ENCODE measurements at regions of chr6 and their contacts with region 1.

Region 1: DNA sequence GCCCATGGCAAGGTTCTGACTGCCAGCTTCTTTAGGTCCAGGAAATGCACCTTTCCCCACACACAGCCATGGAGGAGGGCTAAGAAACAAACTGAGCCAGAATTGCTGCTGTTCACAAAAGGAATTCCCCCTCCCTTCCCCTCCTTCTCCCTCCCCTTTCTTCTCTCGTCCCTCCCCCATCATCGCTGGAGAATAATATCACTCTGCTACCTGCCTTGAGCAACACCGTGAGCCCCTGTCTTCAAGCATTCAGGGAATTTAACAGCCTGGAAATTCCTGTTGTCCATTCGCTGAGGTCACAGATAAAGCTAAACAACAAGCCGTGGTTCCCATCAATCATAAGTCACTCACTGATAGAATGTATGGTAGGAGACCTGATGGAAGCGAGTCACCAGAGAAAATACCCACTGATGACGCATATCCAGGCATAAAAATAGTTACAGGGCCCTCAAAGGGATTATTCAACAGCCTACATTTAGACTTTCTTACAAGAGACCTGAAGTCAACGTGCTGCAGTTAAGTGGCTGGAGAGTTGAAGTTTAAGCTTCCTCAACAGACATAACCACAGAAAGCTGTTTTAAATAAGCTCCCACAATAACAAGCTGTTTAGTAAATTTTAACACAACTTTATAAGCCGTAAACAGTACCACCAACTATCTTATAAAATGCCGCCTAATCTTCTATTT is 59.7 kb downstream of the HIVEP2 start:
- DNase-seq: peak; percentile 90
- ATAC-seq: peak; percentile 81
- H3K4me3 ChIP-seq: peak overlapping the region in 4 of 5 experiments; percentile 28 to 50 (median 44)
- H3K4me3 Mint-ChIP-seq: peak overlapping the region; percentile 99
- H3K27ac ChIP-seq: peak overlapping the region; percentile 80 to 88
- H3K27ac Mint-ChIP-seq: peak overlapping the region; percentile 99
- H3K4me1 ChIP-seq: peaks cover 29 to 38% of the 10 kb centered on the region in 2 donors
- H3K4me1 Mint-ChIP-seq: peaks cover 76% of the 10 kb centered on the region
- H3K27me3 ChIP-seq: no peaks in the 10 kb centered on the region
- H3K27me3 Mint-ChIP-seq: no peaks in the 10 kb centered on the region
- CTCF ChIP-seq: no peak

Region 2: GRCh38 chr6:142692942-142693341 is 192.4 kb before region 1 on chr6:
- CTCF ChIA-PET with region 1: interaction called, 11 read pairs
- POLR2A ChIA-PET with region 1: no interaction called
- intact Hi-C with region 1: loop called (anchors 1 kb)
- DNase-seq: peak; percentile 79
- ATAC-seq: peak; percentile 91
- H3K4me3 ChIP-seq: no peak overlapping the region
- H3K4me3 Mint-ChIP-seq: no peak overlapping the region
- H3K27ac ChIP-seq: no peak overlapping the region
- H3K27ac Mint-ChIP-seq: no peak overlapping the region
- H3K4me1 ChIP-seq: peaks cover 4% of the 10 kb centered on the region in 2 donors
- H3K4me1 Mint-ChIP-seq: peaks cover 5% of the 10 kb centered on the region
- H3K27me3 ChIP-seq: no peaks in the 10 kb centered on the region
- H3K27me3 Mint-ChIP-seq: no peaks in the 10 kb centered on the region
- CTCF ChIP-seq: peak; percentile 98

Region 3: DNA sequence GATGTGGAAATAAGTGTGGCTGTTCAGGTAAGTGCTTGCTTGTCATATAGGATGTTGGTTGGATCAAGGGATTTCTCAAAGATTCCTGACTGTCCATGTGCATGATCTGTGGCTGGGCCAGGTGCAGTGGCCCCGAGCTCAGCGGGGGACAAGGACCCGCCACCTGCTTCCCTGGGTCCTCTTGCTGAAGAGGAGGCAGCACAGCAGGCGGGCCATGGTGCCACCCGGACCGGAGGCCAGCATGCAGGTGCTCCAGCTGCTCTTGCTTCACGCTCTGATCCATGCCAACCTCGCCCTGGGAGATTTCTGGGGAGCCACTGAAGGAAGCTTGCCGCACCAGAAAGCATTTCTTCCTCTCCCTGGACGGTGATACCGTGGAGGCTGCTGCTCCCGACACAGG is 114.2 kb before region 1 on chr6:
- CTCF ChIA-PET with region 1: no interaction called
- POLR2A ChIA-PET with region 1: no interaction called
- intact Hi-C with region 1: no loop called
- DNase-seq: no peak
- ATAC-seq: no peak
- H3K4me3 ChIP-seq: no peak overlapping the region
- H3K4me3 Mint-ChIP-seq: no peak overlapping the region
- H3K27ac ChIP-seq: no peak overlapping the region
- H3K27ac Mint-ChIP-seq: no peak overlapping the region
- H3K4me1 ChIP-seq: no peaks in the 10 kb centered on the region
- H3K4me1 Mint-ChIP-seq: no peaks in the 10 kb centered on the region
- H3K27me3 ChIP-seq: no peaks in the 10 kb centered on the region
- H3K27me3 Mint-ChIP-seq: no peaks in the 10 kb centered on the region
- CTCF ChIP-seq: no peak

Region 4: DNA sequence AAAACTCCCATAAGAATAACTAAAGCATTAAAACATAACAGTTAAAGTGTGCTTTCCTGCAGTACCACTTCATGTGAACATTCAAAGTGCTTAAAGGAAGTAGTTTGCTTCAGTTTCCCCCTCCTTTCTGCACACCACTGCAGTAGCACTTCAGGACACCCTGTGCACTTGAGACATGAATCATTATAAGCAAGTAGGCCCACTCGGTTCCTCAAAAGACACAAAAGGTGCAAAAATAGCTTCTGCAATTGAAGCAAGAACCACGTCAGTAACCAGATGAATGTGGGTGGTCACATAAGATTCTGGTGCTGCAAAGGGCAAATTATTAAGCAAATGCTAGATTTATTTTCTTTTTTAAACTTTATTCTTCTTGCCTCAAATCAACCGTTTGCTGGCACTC is 101.0 kb before region 1 on chr6:
- CTCF ChIA-PET with region 1: interaction called, 3 read pairs
- POLR2A ChIA-PET with region 1: no interaction called
- intact Hi-C with region 1: loop called (anchors 1 kb)
- DNase-seq: peak; percentile 71
- ATAC-seq: peak; percentile 97
- H3K4me3 ChIP-seq: no peak overlapping the region
- H3K4me3 Mint-ChIP-seq: peak overlapping the region; percentile 55
- H3K27ac ChIP-seq: peak overlapping the region in 1 of 2 donors; percentile 61
- H3K27ac Mint-ChIP-seq: peak overlapping the region; percentile 70
- H3K4me1 ChIP-seq: peaks cover 10 to 12% of the 10 kb centered on the region in 2 donors
- H3K4me1 Mint-ChIP-seq: peaks cover 22% of the 10 kb centered on the region
- H3K27me3 ChIP-seq: no peaks in the 10 kb centered on the region
- H3K27me3 Mint-ChIP-seq: no peaks in the 10 kb centered on the region
- CTCF ChIP-seq: no peak

Region 5: DNA sequence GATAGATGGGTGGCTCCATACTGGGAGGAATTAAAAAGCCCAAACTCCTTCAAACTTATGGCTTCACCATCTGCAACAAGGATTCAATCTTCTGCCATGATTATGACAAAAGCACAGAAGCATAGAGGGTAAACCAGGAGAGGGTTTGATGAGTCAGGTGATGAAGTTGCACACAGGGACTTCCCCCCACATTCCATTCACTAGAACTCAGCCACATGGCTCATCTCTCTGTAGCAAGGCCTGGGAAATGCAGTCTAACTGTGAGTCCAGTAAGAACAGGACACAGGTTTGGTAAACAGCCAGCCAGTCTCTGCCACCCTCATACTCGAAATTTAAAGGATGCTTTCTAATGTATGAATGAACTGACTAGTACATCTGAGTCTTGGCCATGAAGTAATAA is 83.2 kb before region 1 on chr6:
- CTCF ChIA-PET with region 1: no interaction called
- POLR2A ChIA-PET with region 1: no interaction called
- intact Hi-C with region 1: no loop called
- DNase-seq: no peak
- ATAC-seq: no peak
- H3K4me3 ChIP-seq: no peak overlapping the region
- H3K4me3 Mint-ChIP-seq: no peak overlapping the region
- H3K27ac ChIP-seq: peak overlapping the region in 1 of 2 donors; percentile 9
- H3K27ac Mint-ChIP-seq: no peak overlapping the region
- H3K4me1 ChIP-seq: peaks cover 11 to 16% of the 10 kb centered on the region in 2 donors
- H3K4me1 Mint-ChIP-seq: peaks cover 62% of the 10 kb centered on the region
- H3K27me3 ChIP-seq: no peaks in the 10 kb centered on the region
- H3K27me3 Mint-ChIP-seq: no peaks in the 10 kb centered on the region
- CTCF ChIP-seq: no peak

Region 6: GRCh38 chr6:142845624-142846458 is 39.5 kb before region 1 on chr6:
- CTCF ChIA-PET with region 1: interaction called, 6 read pairs
- POLR2A ChIA-PET with region 1: interaction called, 4 read pairs
- intact Hi-C with region 1: loop called (anchors 1 kb)
- DNase-seq: peak; percentile 43
- ATAC-seq: peak; percentile 66
- H3K4me3 ChIP-seq: peak overlapping the region; percentile 15 to 71 (median 41)
- H3K4me3 Mint-ChIP-seq: peak overlapping the region; percentile 95
- H3K27ac ChIP-seq: peak overlapping the region; percentile 86 to 94
- H3K27ac Mint-ChIP-seq: peak overlapping the region; percentile 97
- H3K4me1 ChIP-seq: peaks cover 74 to 78% of the 10 kb centered on the region in 2 donors
- H3K4me1 Mint-ChIP-seq: peaks cover 90% of the 10 kb centered on the region
- H3K27me3 ChIP-seq: no peaks in the 10 kb centered on the region
- H3K27me3 Mint-ChIP-seq: no peaks in the 10 kb centered on the region
- CTCF ChIP-seq: no peak

Region 7: GRCh38 chr6:142867988-142868812 is 17.1 kb before region 1 on chr6:
- CTCF ChIA-PET with region 1: interaction called, 4 read pairs
- POLR2A ChIA-PET with region 1: interaction called, 6 read pairs
- intact Hi-C with region 1: loop called (anchors 2 kb)
- DNase-seq: peak; percentile 47
- ATAC-seq: no peak
- H3K4me3 ChIP-seq: peak overlapping the region in 4 of 5 experiments; percentile 1 to 51 (median 16)
- H3K4me3 Mint-ChIP-seq: peak overlapping the region; percentile 76
- H3K27ac ChIP-seq: peak overlapping the region; percentile 21 to 64
- H3K27ac Mint-ChIP-seq: peak overlapping the region; percentile 67
- H3K4me1 ChIP-seq: peaks cover 41 to 65% of the 10 kb centered on the region in 2 donors
- H3K4me1 Mint-ChIP-seq: peaks cover 80% of the 10 kb centered on the region
- H3K27me3 ChIP-seq: no peaks in the 10 kb centered on the region
- H3K27me3 Mint-ChIP-seq: no peaks in the 10 kb centered on the region
- CTCF ChIP-seq: no peak

Region 8: GRCh38 chr6:142913511-142914047 is 28.3 kb after region 1 on chr6:
- CTCF ChIA-PET with region 1: no interaction called
- POLR2A ChIA-PET with region 1: no interaction called
- intact Hi-C with region 1: loop called (anchors 1 kb)
- DNase-seq: peak; percentile 92
- ATAC-seq: peak; percentile 95
- H3K4me3 ChIP-seq: peak overlapping the region in 4 of 5 experiments; percentile 9 to 60 (median 24)
- H3K4me3 Mint-ChIP-seq: peak overlapping the region; percentile 91
- H3K27ac ChIP-seq: peak overlapping the region; percentile 93
- H3K27ac Mint-ChIP-seq: peak overlapping the region; percentile 99
- H3K4me1 ChIP-seq: peaks cover 21 to 22% of the 10 kb centered on the region in 2 donors
- H3K4me1 Mint-ChIP-seq: peaks cover 40% of the 10 kb centered on the region
- H3K27me3 ChIP-seq: no peaks in the 10 kb centered on the region
- H3K27me3 Mint-ChIP-seq: no peaks in the 10 kb centered on the region
- CTCF ChIP-seq: peak; percentile 63

Region 9: DNA sequence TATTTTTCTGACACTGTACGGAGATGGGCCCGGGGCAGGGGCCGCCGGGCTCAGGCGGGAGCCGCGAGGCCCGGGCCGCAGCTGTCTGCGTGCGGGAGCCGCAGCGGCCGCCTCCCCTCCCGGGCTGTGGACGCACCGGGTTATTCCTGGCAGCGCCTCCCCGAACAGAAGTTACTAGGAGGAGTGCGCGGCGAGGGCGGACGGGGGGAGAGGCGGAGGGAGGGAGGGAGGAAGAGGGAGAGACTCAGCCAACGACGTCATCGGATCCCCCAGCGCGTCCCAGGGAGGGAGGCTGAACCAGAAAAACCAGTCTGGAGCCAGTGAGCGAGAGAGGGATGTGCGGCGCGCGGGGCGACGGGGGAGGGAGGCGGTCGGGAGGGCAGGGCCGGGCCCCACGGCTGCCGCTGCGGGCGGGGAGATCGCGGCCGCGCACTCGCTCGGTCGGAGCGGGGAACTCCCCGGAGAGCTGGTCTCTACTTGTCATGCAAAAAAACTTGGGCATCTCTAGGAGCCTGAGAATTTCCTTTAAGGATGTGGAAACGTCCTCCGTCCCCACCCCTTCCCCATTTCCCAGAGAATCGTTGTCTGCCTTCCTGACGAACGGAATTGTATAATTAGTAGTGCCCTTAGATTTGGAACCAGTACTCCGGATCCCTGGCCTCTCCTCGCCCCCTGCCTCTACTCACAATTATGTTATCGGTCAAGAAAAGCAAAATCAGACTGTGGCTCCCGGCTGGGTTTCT is 61.0 kb after region 1 on chr6:
- CTCF ChIA-PET with region 1: interaction called, 11 read pairs
- POLR2A ChIA-PET with region 1: interaction called, 6 read pairs
- intact Hi-C with region 1: loop called (anchors 1 kb)
- DNase-seq: peak; percentile 93
- ATAC-seq: peak; percentile 28
- H3K4me3 ChIP-seq: peak overlapping the region; percentile 85 to 96 (median 90)
- H3K4me3 Mint-ChIP-seq: peak overlapping the region; percentile 99
- H3K27ac ChIP-seq: peak overlapping the region; percentile 100
- H3K27ac Mint-ChIP-seq: peak overlapping the region; percentile 99
- H3K4me1 ChIP-seq: peaks cover 19 to 29% of the 10 kb centered on the region in 2 donors
- H3K4me1 Mint-ChIP-seq: peaks cover 43% of the 10 kb centered on the region
- H3K27me3 ChIP-seq: no peaks in the 10 kb centered on the region
- H3K27me3 Mint-ChIP-seq: no peaks in the 10 kb centered on the region
- CTCF ChIP-seq: no peak

Region 10: GRCh38 chr6:142985281-142985680 is 100.0 kb after region 1 on chr6:
- CTCF ChIA-PET with region 1: no interaction called
- POLR2A ChIA-PET with region 1: no interaction called
- intact Hi-C with region 1: no loop called
- DNase-seq: no peak
- ATAC-seq: no peak
- H3K4me3 ChIP-seq: no peak overlapping the region
- H3K4me3 Mint-ChIP-seq: no peak overlapping the region
- H3K27ac ChIP-seq: no peak overlapping the region
- H3K27ac Mint-ChIP-seq: no peak overlapping the region
- H3K4me1 ChIP-seq: no peaks in the 10 kb centered on the region
- H3K4me1 Mint-ChIP-seq: peaks cover 7% of the 10 kb centered on the region
- H3K27me3 ChIP-seq: no peaks in the 10 kb centered on the region
- H3K27me3 Mint-ChIP-seq: peaks cover 4% of the 10 kb centered on the region
- CTCF ChIP-seq: no peak

Measured in B cell (primary cell).